ENCODE measurements at regions of chr22 and their contacts with region 1.

Region 1: DNA sequence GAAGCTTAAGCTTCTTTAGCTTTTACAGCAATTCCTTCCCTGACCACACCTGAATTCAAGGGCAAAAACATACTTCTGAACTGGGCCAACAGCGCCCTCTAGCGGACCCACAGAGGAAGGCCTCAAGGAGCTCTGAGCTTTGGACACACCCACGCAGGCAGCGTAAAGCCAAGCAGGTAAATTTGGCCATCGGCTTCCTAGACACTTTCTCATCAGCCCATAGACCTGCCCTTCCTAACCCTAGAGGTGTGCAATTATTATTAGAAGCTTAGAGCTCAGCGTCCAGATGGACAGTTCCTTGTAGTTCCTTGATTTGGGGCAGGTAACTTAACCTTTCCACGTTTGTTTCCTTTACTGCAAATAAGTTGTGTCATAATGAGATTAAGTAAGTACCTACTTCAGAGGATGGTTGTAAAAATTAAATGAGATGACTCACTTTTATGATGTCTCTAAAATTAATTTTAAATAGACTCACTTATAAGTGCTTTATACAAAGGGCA is 25.7 kb upstream of the HMGXB4 start:
- DNase-seq: peak; percentile 55
- ATAC-seq: peak; percentile 82
- H3K4me3 ChIP-seq: no peak overlapping the region
- H3K27ac ChIP-seq: no peak overlapping the region
- H3K4me1 ChIP-seq: no peaks in the 10 kb centered on the region
- H3K27me3 ChIP-seq: peaks cover 19% of the 10 kb centered on the region
- CTCF ChIP-seq: peak; percentile 75
- POLR2A ChIP-seq: no peak
- RAD21 ChIP-seq: peak; percentile 71

Region 2: DNA sequence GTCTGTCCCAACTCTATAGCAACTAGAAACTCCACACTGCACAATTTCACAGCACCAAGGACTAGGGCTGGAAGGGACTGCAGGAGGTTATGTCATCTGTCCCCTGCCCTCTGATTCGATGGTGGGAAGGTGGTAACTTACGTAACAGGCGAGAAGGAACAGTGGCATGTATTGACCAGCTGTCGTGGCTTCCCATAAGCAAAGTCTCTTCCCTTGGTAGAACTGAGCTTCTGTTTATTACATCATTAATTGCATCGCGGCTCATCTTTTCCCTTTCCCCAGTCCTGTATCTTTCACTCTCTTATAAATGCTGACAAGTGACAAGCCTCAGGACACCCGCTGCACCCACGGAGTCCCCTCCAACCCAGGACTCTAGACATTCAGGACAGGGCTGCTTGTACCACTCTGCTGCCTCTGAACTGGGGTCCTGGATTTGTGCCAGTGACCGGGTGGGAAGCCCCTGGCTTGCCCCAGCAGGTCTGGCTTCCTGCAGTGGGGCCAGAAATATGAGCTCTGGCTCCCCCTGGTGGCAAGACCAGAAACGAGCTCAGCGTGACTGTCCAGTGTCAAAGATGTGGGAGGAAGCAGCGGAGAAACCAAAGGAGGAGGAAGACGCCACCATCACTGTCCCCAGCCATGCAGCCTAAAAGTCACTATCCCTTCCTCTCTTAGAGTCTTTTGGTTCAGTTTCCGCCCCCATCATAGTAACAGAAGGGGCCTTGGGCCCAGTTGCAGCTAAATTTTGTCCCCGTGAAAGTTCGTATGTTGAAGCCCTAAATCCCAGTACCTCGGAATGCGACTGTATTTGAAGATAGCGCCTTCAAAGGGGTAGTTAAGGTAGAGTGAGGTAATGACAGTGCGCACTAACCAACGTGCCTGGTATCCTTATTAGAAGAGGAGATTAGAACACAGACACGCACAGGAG is 81.2 kb before region 1 on chr22:
- CTCF ChIA-PET with region 1: interaction called, 4 read pairs
- POLR2A ChIA-PET with region 1: no interaction called
- dilution Hi-C with region 1: no loop called
- in situ Hi-C with region 1: no loop called
- intact Hi-C with region 1: loop called (anchors 5 kb)
- DNase-seq: peak; percentile 42
- ATAC-seq: peak; percentile 77
- H3K4me3 ChIP-seq: no peak overlapping the region
- H3K27ac ChIP-seq: no peak overlapping the region
- H3K4me1 ChIP-seq: no peaks in the 10 kb centered on the region
- H3K27me3 ChIP-seq: peaks cover 4% of the 10 kb centered on the region
- CTCF ChIP-seq: peak; percentile 60
- POLR2A ChIP-seq: no peak
- RAD21 ChIP-seq: peak; percentile 44

Region 3: DNA sequence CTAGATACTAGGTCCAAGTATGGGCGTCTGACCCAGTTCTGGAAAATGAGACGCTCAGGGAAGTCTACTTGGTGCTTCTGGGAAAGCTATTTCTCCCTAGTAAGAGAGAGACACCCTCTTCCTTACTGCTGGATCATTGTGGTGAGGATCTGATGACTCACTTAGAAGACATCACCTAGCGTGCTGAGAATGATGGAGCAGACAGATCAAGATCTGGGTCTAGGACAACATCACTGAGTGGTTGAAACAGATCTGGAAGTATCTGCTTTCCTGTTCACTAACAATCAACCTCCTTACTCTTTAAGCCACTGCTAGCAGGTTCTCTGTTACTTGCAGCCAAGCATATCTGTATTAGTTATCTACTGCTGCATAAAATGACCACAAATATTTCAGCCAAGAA is 12.6 kb before region 1 on chr22:
- CTCF ChIA-PET with region 1: interaction called, 19 read pairs
- POLR2A ChIA-PET with region 1: no interaction called
- dilution Hi-C with region 1: no loop called
- in situ Hi-C with region 1: no loop called
- intact Hi-C with region 1: no loop called
- DNase-seq: peak; percentile 69
- ATAC-seq: peak; percentile 67; the same call in 1 of the 2 replicates
- H3K4me3 ChIP-seq: no peak overlapping the region
- H3K27ac ChIP-seq: no peak overlapping the region
- H3K4me1 ChIP-seq: peaks cover 1% of the 10 kb centered on the region; the same call in 1 of the 2 replicates
- H3K27me3 ChIP-seq: peaks cover 4% of the 10 kb centered on the region
- CTCF ChIP-seq: no peak
- POLR2A ChIP-seq: no peak
- RAD21 ChIP-seq: no peak

Region 4: DNA sequence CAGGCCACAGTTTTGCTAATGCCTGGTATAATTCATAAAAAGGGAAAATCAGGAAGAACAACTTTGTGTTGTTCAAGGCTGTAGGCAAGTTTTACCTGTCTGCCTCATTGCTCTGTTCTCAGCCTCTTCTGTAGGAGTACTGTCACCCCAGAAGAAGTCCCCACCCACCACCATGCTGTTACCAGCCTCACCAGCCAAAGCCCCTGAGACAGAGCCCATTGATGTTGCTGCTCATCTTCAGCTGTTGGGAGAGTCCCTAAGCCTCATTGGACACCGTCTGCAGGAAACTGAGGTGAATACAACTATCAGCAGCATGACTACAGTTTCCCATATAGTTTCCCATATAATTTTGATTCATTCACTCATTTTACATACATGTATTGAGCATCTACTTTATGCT is 56.5 kb after region 1 on chr22:
- CTCF ChIA-PET with region 1: no interaction called
- POLR2A ChIA-PET with region 1: no interaction called
- dilution Hi-C with region 1: no loop called
- in situ Hi-C with region 1: no loop called
- intact Hi-C with region 1: no loop called
- DNase-seq: no peak
- ATAC-seq: no peak
- H3K4me3 ChIP-seq: no peak overlapping the region
- H3K27ac ChIP-seq: no peak overlapping the region
- H3K4me1 ChIP-seq: no peaks in the 10 kb centered on the region
- H3K27me3 ChIP-seq: no peaks in the 10 kb centered on the region
- CTCF ChIP-seq: no peak
- POLR2A ChIP-seq: no peak
- RAD21 ChIP-seq: no peak

Region 5: DNA sequence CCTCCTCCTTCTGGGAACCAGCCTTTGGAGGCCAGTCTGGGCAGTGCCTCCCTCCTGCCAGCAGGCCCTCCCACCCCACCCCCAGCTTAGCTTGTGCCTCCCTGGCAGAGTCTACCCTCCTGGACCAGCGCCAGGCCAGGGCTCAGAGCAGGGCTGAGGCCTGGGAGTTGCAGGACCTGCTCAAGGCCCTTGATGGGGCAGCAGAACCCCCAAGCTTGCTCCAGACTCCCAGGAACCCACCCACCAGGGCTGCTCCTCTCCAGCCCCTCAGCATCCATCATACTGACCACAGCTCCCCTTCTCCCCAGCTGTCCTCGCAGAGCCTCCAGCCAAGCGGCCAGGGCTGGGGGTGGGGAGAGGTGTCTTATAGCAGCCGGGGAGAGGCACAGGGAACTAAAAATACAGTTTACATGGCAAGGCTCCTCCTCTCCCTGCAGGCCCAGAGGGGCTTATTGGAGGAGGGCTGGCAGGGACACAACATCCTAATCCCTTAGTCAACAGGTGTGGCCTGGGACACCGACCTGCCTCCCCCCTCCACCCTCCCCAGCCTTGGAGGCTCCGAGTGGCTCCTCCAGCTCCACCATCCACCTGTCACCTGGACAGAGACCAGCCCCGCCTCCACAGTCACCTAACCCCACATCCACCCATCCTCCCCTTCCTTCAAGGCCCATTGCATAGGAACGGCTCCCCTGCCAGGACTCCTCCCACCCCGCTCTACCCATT is 390.7 kb after region 1 on chr22:
- CTCF ChIA-PET with region 1: no interaction called
- POLR2A ChIA-PET with region 1: no interaction called
- dilution Hi-C with region 1: no loop called
- in situ Hi-C with region 1: no loop called
- intact Hi-C with region 1: no loop called
- DNase-seq: no peak
- ATAC-seq: no peak
- H3K4me3 ChIP-seq: no peak overlapping the region
- H3K27ac ChIP-seq: no peak overlapping the region
- H3K4me1 ChIP-seq: peaks cover 2% of the 10 kb centered on the region; the same call in 1 of the 2 replicates
- H3K27me3 ChIP-seq: peaks cover 5% of the 10 kb centered on the region
- CTCF ChIP-seq: no peak
- POLR2A ChIP-seq: no peak
- RAD21 ChIP-seq: no peak

Measured in IMR-90 (cell line).